Cardiac septum (tissue), 1 donor: ENCODE measurements at regions of chr20 and their contacts with region 1.

Region 1: GRCh38 chr20:38221119-38221589 is 39.4 kb downstream of the KIAA1755 start:
- DNase-seq: peak; percentile 88

Region 2: DNA sequence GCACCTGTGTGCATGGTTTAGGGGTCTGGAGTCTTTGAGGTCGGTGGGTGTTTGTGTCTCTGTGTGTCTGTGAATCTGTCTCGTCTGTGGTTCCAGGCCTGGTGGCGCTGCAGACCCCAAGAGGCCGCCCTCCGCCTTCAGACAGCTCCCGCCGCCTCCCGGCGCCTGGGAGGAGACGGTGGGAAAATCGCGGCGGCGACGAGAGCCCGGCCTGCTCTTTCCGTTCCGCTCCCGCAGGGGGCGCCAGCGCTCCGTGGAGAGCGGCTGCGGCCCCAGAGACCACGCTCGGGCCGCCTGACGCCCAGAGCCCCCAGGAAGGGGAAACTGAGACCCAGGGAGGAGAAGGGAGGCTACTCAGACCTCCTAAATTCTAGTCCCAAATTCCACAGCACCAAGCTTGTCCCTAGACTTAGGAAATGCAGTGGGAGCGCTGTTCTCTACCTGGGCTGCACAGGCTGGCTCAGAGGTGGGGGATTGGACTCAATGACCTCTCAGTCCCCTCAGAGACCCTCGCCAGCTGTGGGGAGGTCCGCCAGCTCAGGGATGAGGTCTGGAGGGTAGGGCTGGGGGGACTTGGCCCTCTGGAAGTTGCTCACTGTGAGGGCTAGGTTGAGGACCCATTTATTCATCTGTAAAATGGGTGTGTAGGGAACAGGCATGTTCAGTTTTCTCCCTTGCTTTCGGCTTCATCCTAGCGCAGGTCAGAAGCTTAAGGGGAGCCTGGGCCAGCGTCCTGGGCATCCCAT is 656.6 kb before region 1 on chr20:
- intact Hi-C with region 1: loop called (anchors 10 kb)
- DNase-seq: peak; percentile 56

Region 3: GRCh38 chr20:38057351-38057972 is 163.7 kb before region 1 on chr20:
- intact Hi-C with region 1: loop called (anchors 1 kb)
- DNase-seq: peak; percentile 90

Region 4: GRCh38 chr20:38127011-38127621 is 94.0 kb before region 1 on chr20:
- intact Hi-C with region 1: loop called (anchors 5 kb)
- DNase-seq: peak; percentile 75

Region 5: GRCh38 chr20:38139241-38139912 is 81.8 kb before region 1 on chr20:
- intact Hi-C with region 1: no loop called
- DNase-seq: peak; percentile 50

Region 6: DNA sequence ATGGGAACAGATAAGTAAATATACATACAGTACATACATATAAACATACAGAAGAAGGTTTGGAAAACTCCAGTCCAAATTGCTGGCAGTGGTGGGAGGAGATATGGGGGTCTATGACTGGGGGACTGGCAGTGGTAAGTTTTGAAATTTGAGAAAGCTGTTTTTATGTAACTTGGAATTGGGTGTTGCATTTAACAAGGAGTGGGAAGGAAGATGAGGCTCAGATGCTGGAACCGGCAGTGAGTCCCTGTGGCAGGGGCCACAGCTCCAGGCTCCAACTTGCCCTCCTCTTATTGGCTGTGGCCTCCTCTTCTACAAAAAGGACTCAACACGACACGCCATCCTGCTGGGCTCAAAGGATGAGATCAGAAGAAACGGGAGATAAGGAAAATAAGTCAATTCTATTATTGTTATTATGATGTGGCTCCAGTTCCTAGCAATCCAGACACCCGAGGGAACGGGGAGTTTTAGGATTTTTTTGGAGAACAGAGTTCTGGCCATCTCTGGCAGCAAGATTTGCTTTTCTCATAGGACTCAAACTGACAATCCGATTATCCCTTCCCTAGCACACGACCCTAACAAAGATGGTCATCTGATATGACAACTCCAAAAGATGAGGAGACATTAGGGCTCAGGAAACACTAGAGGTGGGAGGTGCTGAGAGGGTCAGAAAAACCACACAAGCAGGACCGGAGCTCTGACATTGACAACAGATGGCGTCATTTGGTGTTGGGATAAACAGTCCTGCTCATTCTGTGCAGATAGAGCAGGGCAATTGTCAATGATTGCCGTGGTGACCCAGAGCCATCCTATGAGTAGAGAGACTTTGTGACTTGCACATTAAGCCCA is 50.1 kb before region 1 on chr20:
- intact Hi-C with region 1: loop called (anchors 2 kb)
- DNase-seq: no peak

Region 7: DNA sequence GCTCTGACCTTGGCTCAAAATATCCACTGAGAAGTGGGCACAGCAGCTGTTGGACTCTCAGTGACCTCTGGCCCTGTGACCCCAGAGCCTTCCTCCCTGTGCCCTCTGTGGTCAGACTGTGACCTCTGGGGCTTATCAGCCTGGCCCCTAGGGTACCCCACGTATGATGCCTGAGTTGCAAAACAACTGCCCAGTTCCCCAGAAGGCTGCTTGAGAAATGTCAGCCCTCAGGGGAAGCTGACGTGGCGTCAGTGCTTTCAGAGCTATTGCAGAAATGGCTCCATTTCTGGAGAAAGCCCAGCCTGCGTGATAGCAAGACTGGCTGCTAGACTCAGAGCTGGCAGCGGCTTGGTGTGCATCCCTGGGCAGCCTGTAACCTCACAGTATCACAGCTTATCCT is 24.6 kb before region 1 on chr20:
- intact Hi-C with region 1: no loop called
- DNase-seq: peak; percentile 88

Region 8: GRCh38 chr20:38321959-38322598 is 100.9 kb after region 1 on chr20:
- intact Hi-C with region 1: loop called (anchors 5 kb)
- DNase-seq: no peak

Region 9: DNA sequence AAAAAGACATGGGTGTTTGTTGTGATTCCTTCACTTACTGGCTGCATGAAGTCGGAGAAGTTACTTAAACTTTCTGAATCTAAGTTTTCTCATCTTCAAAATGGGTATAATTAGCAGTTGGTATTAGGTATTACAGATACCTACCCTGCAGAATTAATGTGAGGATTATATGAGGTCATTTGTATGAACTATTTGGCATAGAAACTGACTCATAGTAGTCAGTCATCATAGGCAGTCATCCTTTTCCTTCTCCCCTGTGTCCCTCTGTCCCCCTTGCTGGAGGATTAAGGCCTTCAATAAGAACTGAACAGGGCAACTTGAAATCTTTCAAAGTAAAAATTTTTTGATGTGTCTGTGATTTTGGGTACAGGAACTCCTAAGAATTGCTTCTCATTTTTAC is 277.8 kb after region 1 on chr20:
- intact Hi-C with region 1: no loop called
- DNase-seq: no peak